Cardiac septum (tissue), 1 donor: ENCODE measurements at regions of chr3 and their contacts with region 1.

Region 1: DNA sequence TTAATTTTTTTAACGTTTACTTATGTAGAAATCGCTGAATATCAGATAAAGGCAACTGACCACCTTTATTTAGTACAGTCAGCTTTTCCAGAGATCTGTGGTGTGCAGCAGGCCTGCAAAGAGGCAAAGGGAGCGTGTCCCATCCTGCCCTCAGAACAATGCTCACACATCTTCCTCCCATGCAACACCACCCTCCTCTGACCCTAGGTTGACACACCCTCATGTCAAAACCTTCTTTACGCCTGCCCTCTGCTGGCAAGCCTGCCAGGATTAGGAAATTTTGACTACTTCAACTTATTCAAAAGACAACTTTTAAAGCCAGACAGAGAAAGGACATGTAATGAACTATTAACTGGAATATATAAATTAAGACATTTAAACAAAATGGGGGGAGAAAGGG is 513.7 kb downstream of the FOXP1 start:
- DNase-seq: no peak

Region 2: DNA sequence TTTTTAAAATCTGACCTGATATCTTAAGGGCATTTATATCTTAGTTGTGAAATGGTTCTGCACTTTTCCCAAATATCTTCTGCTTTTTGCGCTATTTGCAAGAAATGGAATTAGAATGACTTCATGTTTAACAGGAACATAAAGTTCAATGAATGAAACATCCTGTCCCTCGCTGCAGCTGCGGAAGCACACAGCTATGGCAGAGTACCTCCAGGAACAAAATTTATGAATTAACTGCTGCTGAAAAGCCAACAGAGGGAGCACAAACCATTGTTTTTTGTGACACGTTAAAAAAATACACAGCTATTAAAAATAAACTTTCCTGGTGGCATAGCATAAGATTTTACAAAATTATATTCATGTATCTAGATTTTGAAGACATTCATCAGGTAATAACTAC is 353.0 kb before region 1 on chr3:
- intact Hi-C with region 1: loop called (anchors 5 kb)
- DNase-seq: no peak

Region 3: GRCh38 chr3:71101626-71102025 is 31.8 kb after region 1 on chr3:
- intact Hi-C with region 1: no loop called
- DNase-seq: no peak

Region 4: GRCh38 chr3:71111784-71112440 is 42.1 kb after region 1 on chr3:
- intact Hi-C with region 1: loop called (anchors 5 kb)
- DNase-seq: no peak